ENCODE measurements at regions of chr20 and their contacts with region 1.

Region 1: GRCh38 chr20:22333885-22334545 is 250.4 kb downstream of the FOXA2 start:
- DNase-seq: peak; percentile 71
- ATAC-seq: peak; percentile 92
- H3K4me3 ChIP-seq: no peak overlapping the region
- H3K27ac ChIP-seq: no peak overlapping the region
- H3K4me1 ChIP-seq: no peaks in the 10 kb centered on the region
- H3K27me3 ChIP-seq: peaks cover 4 to 20% of the 10 kb centered on the region in 2 experiments; a peak in 3 of 5 replicates
- CTCF ChIP-seq: peak; percentile 90
- EP300 ChIP-seq: no peak
- POLR2A ChIP-seq: no peak
- RAD21 ChIP-seq: peak; percentile 80

Region 2: DNA sequence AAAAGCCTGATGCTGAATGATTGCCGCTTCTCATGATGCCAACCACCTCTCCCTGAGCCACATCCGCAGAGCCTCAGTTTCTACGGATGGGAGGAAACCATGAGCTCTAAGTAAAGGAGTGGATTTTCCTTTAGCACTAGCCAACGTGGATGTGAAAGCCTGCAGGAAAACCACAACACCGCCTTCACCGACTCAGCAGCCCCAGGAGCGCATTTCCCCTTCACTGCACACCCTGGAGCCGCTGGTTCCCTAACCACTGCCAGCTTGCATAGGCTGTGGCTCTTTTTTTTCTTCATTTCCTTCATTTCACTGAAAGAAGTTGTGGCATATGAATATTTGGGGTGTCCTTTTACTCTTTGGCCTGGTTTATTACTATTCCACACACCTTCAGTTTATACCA is 650.6 kb after region 1 on chr20:
- CTCF ChIA-PET with region 1: no interaction called
- POLR2A ChIA-PET with region 1: no interaction called
- in situ Hi-C with region 1: loop called (anchors 25 kb)
- intact Hi-C with region 1: no loop called
- DNase-seq: no peak
- ATAC-seq: no peak
- H3K4me3 ChIP-seq: no peak overlapping the region
- H3K27ac ChIP-seq: no peak overlapping the region
- H3K4me1 ChIP-seq: no peaks in the 10 kb centered on the region
- H3K27me3 ChIP-seq: peaks cover 0 to 10% of the 10 kb centered on the region in 2 experiments; a peak in 2 of 5 replicates
- CTCF ChIP-seq: no peak
- EP300 ChIP-seq: no peak
- POLR2A ChIP-seq: no peak
- RAD21 ChIP-seq: no peak

Measured in HepG2 (cell line).